ENCODE measurements at regions of chr17 and their contacts with region 1.

Region 1: GRCh38 chr17:38752119-38752929 is at the start of gene PSMB3:
- DNase-seq: peak; percentile 100
- ATAC-seq: peak; percentile 82
- H3K4me3 ChIP-seq: peak within 1 kb of the TSS; percentile 87
- H3K27ac ChIP-seq: peak within 1 kb of the TSS; percentile 86
- H3K4me1 ChIP-seq: peaks cover 15% of the 10 kb centered on the region; the same call in 1 of the 2 replicates
- H3K27me3 ChIP-seq: no peaks in the 10 kb centered on the region; a peak in 1 of 4 replicates
- CTCF ChIP-seq: no peak
- EP300 ChIP-seq: peak in 1 of 2 experiments; percentile 9; a peak in 1 of 4 replicates
- POLR2A ChIP-seq: peak; percentile 79
- RAD21 ChIP-seq: no peak
- polyA plus RNA-seq, gene PSMB3: 1,622 to 2,130 TPM

Region 2: DNA sequence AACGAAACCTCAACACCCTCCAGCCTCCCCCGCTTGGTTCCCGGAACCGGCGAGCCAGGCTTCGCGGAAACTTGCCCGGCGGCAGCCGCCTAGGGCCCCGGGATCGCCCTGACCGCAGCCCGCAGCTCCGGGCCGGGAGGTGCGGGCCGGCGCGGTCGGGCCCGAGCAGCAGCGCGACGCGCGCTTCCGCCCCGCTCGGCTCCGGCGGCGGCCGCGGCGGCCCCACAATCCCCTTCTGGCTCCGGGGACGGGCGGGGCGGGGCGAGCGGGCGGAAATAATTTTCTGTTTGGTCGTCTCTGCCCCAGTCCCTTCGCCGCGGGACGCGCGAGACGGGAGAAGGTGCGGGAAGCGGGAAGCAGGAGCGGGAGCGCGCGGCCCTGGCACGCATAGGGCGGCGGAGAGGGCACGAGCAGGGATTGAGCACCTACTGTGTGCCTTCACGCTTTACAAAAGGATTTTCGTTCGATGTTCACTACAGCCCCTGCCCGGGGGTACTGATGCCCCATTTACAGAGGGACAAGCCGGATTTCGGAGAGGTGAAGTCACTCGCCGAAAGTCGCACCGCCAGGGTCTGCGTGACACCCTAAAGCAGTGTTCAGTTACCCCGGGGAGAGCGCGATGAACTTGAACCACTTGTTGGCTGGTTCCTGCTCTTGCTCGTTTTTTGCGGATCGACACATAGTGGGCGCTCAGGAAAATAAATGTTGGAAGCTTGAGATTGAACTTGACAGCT is 50.0 kb before region 1 on chr17:
- CTCF ChIA-PET with region 1: no interaction called
- POLR2A ChIA-PET with region 1: interaction called, 6 read pairs
- RAD21 ChIA-PET with region 1: interaction called, 3 read pairs
- SMC1A ChIA-PET with region 1: interaction called, 6 read pairs
- in situ Hi-C with region 1: no loop called
- intact Hi-C with region 1: loop called (anchors 1 kb)
- DNase-seq: no peak
- ATAC-seq: peak; percentile 38
- H3K4me3 ChIP-seq: peak overlapping the region; percentile 91
- H3K27ac ChIP-seq: peak overlapping the region; percentile 100
- H3K4me1 ChIP-seq: peaks cover 27% of the 10 kb centered on the region
- H3K27me3 ChIP-seq: no peaks in the 10 kb centered on the region
- CTCF ChIP-seq: no peak
- EP300 ChIP-seq: peak; percentile 8 to 56; a peak in 1 of 4 replicates
- POLR2A ChIP-seq: peak; percentile 90
- RAD21 ChIP-seq: no peak

Region 3: GRCh38 chr17:38719289-38719942 is 32.9 kb before region 1 on chr17:
- CTCF ChIA-PET with region 1: no interaction called
- POLR2A ChIA-PET with region 1: no interaction called
- RAD21 ChIA-PET with region 1: no interaction called
- SMC1A ChIA-PET with region 1: no interaction called
- in situ Hi-C with region 1: no loop called
- intact Hi-C with region 1: no loop called
- DNase-seq: no peak
- ATAC-seq: no peak
- H3K4me3 ChIP-seq: no peak overlapping the region
- H3K27ac ChIP-seq: no peak overlapping the region
- H3K4me1 ChIP-seq: peaks cover 7% of the 10 kb centered on the region
- H3K27me3 ChIP-seq: no peaks in the 10 kb centered on the region
- CTCF ChIP-seq: no peak
- EP300 ChIP-seq: no peak
- POLR2A ChIP-seq: peak; percentile 52; the same call in 1 of the 2 replicates
- RAD21 ChIP-seq: no peak

Region 4: GRCh38 chr17:38729886-38730525 is 22.3 kb before region 1 on chr17 and contains the start of gene CISD3:
- CTCF ChIA-PET with region 1: interaction called, 11 read pairs
- POLR2A ChIA-PET with region 1: interaction called, 4 read pairs
- RAD21 ChIA-PET with region 1: interaction called, 4 read pairs
- SMC1A ChIA-PET with region 1: interaction called, 4 read pairs
- in situ Hi-C with region 1: no loop called
- intact Hi-C with region 1: no loop called
- DNase-seq: no peak
- ATAC-seq: peak; percentile 92
- H3K4me3 ChIP-seq: peak within 1 kb of the TSS; percentile 90
- H3K27ac ChIP-seq: peak within 1 kb of the TSS; percentile 52
- H3K4me1 ChIP-seq: peaks cover 38% of the 10 kb centered on the region
- H3K27me3 ChIP-seq: no peaks in the 10 kb centered on the region
- CTCF ChIP-seq: peak; percentile 61 to 81 (median 65); a peak in 4 of 6 replicates
- EP300 ChIP-seq: 0 out of 4 replicates have a peak, but pooled peaks of 1 of the 2 experiments have one; percentile 28
- POLR2A ChIP-seq: peak; percentile 71; the same call in 1 of the 2 replicates
- RAD21 ChIP-seq: peak; percentile 33; the same call in 1 of the 2 replicates
- polyA plus RNA-seq, gene CISD3: 2.6 to 5.3 TPM

Region 5: GRCh38 chr17:38799378-38800236 is 47.3 kb after region 1 on chr17 and contains the start of gene PIP4K2B:
- CTCF ChIA-PET with region 1: no interaction called
- POLR2A ChIA-PET with region 1: interaction called, 5 read pairs
- RAD21 ChIA-PET with region 1: interaction called, 3 read pairs
- SMC1A ChIA-PET with region 1: interaction called, 5 read pairs
- in situ Hi-C with region 1: no loop called
- intact Hi-C with region 1: loop called (anchors 2 kb)
- DNase-seq: peak; percentile 91
- ATAC-seq: peak; percentile 92
- H3K4me3 ChIP-seq: peak within 1 kb of the TSS; percentile 85
- H3K27ac ChIP-seq: peak within 1 kb of the TSS; percentile 93
- H3K4me1 ChIP-seq: peaks cover 11% of the 10 kb centered on the region
- H3K27me3 ChIP-seq: no peaks in the 10 kb centered on the region
- CTCF ChIP-seq: no peak
- EP300 ChIP-seq: no peak
- POLR2A ChIP-seq: peak; percentile 88
- RAD21 ChIP-seq: no peak
- polyA plus RNA-seq, gene PIP4K2B: 3.8 to 4.0 TPM

Measured in GM12878 (cell line).